ENCODE measurements at regions of chr9 and their contacts with region 1.

Region 1: GRCh38 chr9:90102292-90102901 is 497.6 kb downstream of the GADD45G start:
- DNase-seq: peak; percentile 88 to 91
- ATAC-seq: peak; percentile 93 to 99
- H3K4me3 ChIP-seq: no peak overlapping the region
- H3K27ac ChIP-seq: no peak overlapping the region
- H3K4me1 ChIP-seq: no peaks in the 10 kb centered on the region
- CTCF ChIP-seq: peak; percentile 84
- EP300 ChIP-seq: no peak
- POLR2A ChIP-seq: no peak
- RAD21 ChIP-seq: peak; percentile 91 to 96

Region 2: GRCh38 chr9:90112788-90113187 is 10.4 kb after region 1 on chr9:
- CTCF ChIA-PET with region 1: interaction called, 14 read pairs
- POLR2A ChIA-PET with region 1: no interaction called
- DNase-seq: no peak
- ATAC-seq: no peak
- H3K4me3 ChIP-seq: no peak overlapping the region
- H3K27ac ChIP-seq: no peak overlapping the region
- H3K4me1 ChIP-seq: no peaks in the 10 kb centered on the region
- CTCF ChIP-seq: no peak
- EP300 ChIP-seq: no peak
- POLR2A ChIP-seq: no peak
- RAD21 ChIP-seq: no peak

Measured in A549 (cell line).